Posterior cingulate gyrus (tissue), 11 donors: ENCODE measurements at regions of chr10 and their contacts with region 1.

Region 1: DNA sequence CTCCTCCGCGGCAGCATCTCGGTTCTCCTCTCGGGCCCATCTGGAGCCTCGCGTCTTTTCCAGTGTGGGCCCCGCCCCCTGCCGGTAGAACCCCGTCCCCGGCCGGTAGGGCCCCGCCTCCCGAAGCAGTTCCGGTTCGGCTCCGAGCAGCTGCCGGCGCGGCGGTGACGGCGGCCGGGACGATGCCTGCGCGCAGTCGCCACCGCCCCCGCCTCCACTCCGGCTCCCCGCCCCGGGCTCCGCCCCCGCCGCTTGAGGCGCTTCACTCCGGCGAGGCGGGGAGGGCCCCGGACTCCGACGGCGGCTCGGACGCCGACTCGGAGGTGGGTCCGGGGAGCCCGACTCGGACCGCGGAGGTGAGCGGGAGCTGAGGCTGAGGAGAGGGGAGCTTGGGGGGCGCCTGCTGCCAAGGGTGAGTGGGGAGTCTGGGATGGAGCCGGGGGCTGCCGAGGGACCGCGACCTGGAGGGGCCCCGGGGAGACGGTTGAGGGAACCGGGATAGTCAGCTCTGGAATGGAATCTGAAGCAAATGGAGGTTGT is at the start of gene SAMD8:
- DNase-seq: peak; percentile 89 to 99 (median 93)

Region 2: GRCh38 chr10:75150656-75151055 is 39.2 kb after region 1 on chr10:
- intact Hi-C with region 1: no loop called
- DNase-seq: no peak

Region 3: GRCh38 chr10:75210282-75211006 is 99.0 kb after region 1 on chr10 and contains the start of gene VDAC2:
- intact Hi-C with region 1: loop called (anchors 2 kb)
- DNase-seq: peak; percentile 85 to 99 (median 90)